Activated CD4-positive, alpha-beta T cell treated with anti-CD3 and anti-CD28 coated beads for 36 hours (primary cell): ENCODE measurements at regions of chr16 and their contacts with region 1.

Region 1: DNA sequence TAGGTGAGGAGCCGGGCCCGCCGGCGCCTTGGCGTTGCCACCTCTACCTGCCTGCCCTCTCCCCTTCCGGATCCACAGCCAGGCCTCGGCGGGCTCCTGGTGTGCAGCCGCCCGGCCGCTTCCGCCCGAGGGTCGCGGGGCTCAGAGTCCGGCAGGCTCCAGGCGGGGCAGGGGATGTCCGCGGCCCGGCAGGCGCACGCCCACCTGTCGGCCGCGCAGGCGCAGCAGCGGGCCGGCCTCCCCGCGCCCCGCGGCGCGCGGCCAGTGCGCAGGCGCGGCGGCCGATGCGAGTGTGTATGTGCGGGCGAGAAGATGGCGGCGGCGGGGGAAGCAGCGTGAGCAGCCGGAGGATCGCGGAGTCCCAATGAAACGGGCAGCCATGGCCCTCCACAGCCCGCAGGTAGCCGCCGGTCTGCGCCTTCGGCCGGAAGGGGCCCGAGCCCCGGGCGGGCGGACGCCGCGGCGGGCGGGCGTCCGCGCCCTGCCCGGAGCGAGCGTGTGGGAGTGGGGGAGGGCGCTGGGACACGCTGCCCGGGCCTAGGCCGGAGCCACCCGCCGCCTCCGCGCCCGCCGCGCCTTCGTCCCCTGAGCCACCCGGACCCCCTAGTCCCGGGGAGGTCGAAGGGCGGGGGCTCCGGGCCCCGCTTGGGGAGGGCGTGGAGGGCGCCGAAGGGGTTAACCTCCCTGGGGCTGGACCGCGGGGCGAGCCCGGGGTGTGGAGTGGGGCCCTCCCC is at the start of gene USP10:
- DNase-seq: peak; percentile 90
- ATAC-seq: peak; percentile 83
- H3K4me3 Mint-ChIP-seq: peak within 1 kb of the TSS; percentile 89
- H3K27ac Mint-ChIP-seq: peak within 1 kb of the TSS; percentile 97
- H3K4me1 Mint-ChIP-seq: peaks cover 38% of the 10 kb centered on the region
- H3K27me3 Mint-ChIP-seq: no peaks in the 10 kb centered on the region
- total RNA-seq, gene USP10: 117 to 133 TPM

Region 2: GRCh38 chr16:84647828-84648594 is 51.9 kb before region 1 on chr16 and contains the start of gene KLHL36:
- CTCF ChIA-PET with region 1: interaction called, 3 read pairs
- POLR2A ChIA-PET with region 1: no interaction called
- intact Hi-C with region 1: loop called in 1 of 2 experiments (anchors 1 kb)
- DNase-seq: peak; percentile 79
- ATAC-seq: peak; percentile 85
- H3K4me3 Mint-ChIP-seq: peak within 1 kb of the TSS; percentile 76
- H3K27ac Mint-ChIP-seq: peak within 1 kb of the TSS; percentile 80
- H3K4me1 Mint-ChIP-seq: peaks cover 43% of the 10 kb centered on the region
- H3K27me3 Mint-ChIP-seq: no peaks in the 10 kb centered on the region
- total RNA-seq, gene KLHL36: 31.1 to 43.2 TPM

Region 3: DNA sequence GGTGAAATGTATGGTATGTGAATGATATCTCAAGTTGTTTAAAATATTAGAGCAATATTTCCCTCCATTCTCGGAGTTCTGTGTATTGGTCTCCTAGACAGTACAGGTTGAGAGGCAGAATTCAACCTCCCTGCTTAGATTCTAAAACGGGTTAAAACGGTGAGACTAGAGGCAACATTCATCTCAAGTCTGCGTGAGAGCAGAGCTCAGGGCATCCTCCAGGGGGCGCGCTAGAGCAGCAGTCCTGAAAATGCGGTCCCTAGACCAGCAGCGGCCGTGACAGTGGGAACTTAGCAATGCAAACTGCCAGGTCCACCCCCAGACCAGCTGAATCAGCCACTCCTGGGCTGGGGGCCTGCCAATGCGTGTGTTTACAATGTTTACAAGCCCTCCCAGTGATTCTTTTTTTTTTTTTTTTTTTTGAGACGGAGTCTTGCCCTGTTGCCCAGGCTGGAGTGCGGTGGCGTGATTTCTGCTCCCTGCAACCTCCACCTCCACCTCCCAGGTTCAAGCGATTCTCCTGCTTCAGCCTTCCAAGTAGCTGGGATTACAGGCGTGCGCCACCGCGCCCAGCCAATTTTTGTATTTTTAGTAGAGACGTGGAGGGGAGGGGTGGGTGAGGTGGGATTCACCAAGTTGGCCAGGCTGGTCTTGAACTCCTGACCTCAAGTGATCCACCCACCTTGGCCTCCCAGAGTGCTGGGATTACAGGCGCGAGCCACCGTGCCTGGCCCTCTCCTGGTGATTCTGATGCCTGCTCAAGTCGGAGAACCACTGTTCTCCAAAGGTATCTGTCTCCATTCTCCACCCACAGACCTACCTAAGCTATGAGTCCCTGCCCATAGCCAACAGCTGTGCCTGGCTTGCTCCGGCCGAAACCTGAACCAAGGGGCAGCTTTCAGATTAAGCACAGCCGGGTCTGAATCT is 27.3 kb before region 1 on chr16:
- CTCF ChIA-PET with region 1: interaction called, 7 read pairs
- POLR2A ChIA-PET with region 1: no interaction called
- intact Hi-C with region 1: loop called in 1 of 2 experiments (anchors 1 kb)
- DNase-seq: peak; percentile 91
- ATAC-seq: peak; percentile 96
- H3K4me3 Mint-ChIP-seq: no peak overlapping the region
- H3K27ac Mint-ChIP-seq: no peak overlapping the region
- H3K4me1 Mint-ChIP-seq: peaks cover 7% of the 10 kb centered on the region
- H3K27me3 Mint-ChIP-seq: peaks cover 3% of the 10 kb centered on the region

Region 4: DNA sequence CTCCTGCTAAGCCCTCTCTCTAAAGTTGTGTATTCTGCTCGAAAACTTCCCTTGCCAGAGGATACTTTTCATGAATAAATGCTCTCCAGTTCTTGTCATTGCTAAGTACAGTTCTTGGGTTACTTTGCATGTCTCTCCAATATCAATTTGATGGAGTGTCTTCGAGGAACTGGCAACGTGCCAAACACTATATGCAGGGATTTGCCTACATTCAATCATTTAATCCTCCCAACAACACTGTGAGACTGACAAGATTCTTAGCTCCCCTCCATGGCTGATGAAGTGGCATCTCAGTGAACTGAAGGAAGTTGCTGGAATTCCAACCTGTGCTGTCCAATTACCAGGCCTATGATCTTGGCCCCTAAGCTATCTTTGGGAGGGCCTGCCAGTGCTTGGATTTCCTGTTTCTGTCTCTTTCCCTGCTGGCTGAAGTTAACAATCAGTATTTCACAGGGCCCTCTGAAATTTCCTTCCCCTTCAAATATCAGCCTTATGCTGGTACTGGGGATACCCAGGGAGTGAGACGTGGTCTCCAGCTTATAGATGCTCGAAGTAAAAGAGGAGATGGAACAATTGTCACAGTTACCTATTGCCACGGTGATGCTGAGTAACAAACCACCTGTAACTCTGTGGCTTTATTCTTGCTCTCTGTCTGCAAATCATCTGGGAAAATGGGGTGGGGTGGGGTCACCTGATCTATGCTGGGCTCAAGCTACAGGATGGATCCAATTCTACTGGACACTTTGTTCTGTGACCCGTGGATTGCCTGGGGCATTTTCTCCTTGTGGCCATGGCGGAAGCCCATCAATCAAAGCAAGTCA is 100.5 kb after region 1 on chr16:
- CTCF ChIA-PET with region 1: no interaction called
- POLR2A ChIA-PET with region 1: no interaction called
- intact Hi-C with region 1: no loop called
- DNase-seq: no peak
- ATAC-seq: no peak
- H3K4me3 Mint-ChIP-seq: no peak overlapping the region
- H3K27ac Mint-ChIP-seq: no peak overlapping the region
- H3K4me1 Mint-ChIP-seq: no peaks in the 10 kb centered on the region
- H3K27me3 Mint-ChIP-seq: peaks cover 2% of the 10 kb centered on the region